AG04450 (cell line): ENCODE measurements at regions of chr12 and their contacts with region 1.

Region 1: DNA sequence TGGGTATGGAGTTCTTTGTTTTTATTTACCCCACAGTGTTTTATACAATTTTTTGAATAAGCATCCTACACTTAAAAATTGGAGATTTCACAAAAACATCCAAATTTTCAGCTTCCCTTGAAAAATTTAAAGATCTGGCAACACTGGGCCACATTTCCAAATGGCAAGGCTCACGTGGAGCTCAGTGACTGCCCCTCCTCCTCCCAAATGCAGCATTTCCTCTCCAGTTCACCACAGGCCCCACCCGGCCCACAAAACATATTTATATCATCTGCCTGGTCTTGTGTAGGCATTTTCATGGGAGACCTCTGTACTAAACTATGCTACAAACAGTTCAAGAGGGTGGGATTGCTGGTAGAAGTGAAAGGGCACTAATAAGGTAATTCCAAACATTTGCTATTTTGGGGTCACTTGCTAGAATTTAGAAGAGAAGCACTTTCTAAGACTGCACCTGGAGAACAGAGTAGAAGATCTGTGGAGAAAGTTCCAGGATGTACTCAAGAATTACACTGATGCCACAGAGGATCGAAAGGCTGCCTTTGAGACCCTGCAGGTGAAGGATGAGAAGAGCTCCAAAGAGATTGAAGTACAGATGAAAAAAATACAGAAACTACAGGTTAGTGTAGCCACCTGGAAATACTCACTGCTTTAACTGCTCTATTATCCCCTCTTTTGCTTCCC is 7.3 kb downstream of the FKBP11 start:
- DNase-seq: no peak
- H3K4me3 ChIP-seq: no peak overlapping the region
- H3K27ac ChIP-seq: no peak overlapping the region
- H3K27me3 ChIP-seq: no peaks in the 10 kb centered on the region
- CTCF ChIP-seq: no peak

Region 2: GRCh38 chr12:48350249-48351021 is 567.6 kb before region 1 on chr12 and contains the start of gene ZNF641:
- CTCF ChIA-PET with region 1: no interaction called
- POLR2A ChIA-PET with region 1: no interaction called
- DNase-seq: peak; percentile 2
- H3K4me3 ChIP-seq: peak within 1 kb of the TSS; percentile 81
- H3K27ac ChIP-seq: peak within 1 kb of the TSS; percentile 65
- H3K27me3 ChIP-seq: peaks cover 7% of the 10 kb centered on the region
- CTCF ChIP-seq: no peak
- polyA plus RNA-seq, gene ZNF641: 6.3 and 6.6 TPM in 2 replicates

Region 3: DNA sequence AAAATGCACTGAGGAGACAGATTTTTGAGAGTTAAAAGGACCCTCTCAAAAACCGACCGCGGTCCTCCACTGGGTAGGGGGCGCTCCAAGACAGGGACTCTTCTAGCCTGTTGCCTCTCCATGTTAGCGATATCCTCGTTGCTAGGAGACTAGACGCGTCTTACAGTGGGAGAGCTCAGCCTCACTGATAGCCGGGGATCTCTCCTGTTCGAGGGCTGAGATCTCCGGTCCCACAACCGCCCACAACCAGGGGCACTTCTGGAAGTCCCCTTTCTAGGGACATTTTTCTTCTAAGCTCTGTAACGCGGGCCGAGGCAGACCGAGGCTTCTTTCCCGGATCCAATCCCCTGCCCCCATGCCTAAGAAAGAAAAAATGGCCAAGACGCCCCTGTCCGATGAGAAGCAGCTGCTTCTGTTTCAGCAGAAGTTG is 14.0 kb before region 1 on chr12:
- CTCF ChIA-PET with region 1: interaction called, 15 read pairs
- POLR2A ChIA-PET with region 1: no interaction called
- DNase-seq: peak; percentile 62
- H3K4me3 ChIP-seq: peak overlapping the region; percentile 60
- H3K27ac ChIP-seq: no peak overlapping the region
- H3K27me3 ChIP-seq: no peaks in the 10 kb centered on the region
- CTCF ChIP-seq: peak; percentile 78

Region 4: DNA sequence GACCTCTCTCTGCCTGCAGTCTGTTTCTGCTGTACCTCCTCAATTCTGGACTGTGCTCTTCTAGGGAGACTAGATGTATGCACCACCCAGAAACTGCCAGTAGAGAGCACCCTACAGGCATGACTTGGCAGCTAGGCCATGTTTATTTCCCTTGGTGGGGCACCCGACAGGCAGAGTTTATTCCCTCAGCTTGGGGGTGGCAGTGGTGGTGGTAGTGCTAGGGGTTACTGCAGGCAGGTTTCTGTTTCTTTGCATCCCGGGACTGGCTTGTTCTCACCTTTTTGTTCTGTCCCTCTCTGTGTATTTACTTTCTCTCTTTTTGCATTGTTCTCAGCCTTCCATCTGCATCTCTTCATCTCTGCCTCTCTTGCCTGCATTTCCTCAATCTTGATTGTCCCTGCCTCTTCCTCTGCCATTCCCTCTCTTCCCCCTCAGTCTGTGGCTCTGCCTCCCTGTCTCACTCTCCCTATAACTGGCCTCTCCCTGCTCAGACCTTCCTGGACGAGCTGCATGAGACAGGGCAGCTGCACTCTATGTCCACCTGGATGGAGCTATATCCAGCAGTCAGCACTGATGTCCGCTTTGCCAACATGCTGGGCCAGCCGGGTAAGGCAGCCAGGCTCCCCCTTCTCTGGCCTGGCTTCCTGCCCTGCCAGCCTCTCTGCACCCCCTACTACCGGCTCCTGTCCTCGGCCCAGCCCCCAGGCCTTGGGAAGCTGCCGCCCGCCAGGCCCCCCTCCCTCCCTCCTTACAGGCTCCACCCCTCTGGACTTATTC is 719.2 kb after region 1 on chr12:
- CTCF ChIA-PET with region 1: no interaction called
- POLR2A ChIA-PET with region 1: no interaction called
- DNase-seq: peak; percentile 39
- H3K4me3 ChIP-seq: no peak overlapping the region
- H3K27ac ChIP-seq: peak overlapping the region; percentile 47
- H3K27me3 ChIP-seq: no peaks in the 10 kb centered on the region
- CTCF ChIP-seq: peak; percentile 86